ENCODE measurements at regions of chr2 and their contacts with region 1.

Region 1: GRCh38 chr2:45778720-45779171 is 127.3 kb downstream of the PRKCE start:
- DNase-seq: peak; percentile 37 to 85 (median 72)
- ATAC-seq: peak; percentile 90
- H3K4me3 ChIP-seq: peak overlapping the region in 1 of 2 experiments; percentile 29
- H3K4me3 Mint-ChIP-seq: peak overlapping the region; percentile 54
- H3K27ac ChIP-seq: no peak overlapping the region
- H3K27ac Mint-ChIP-seq: no peak overlapping the region
- H3K4me1 ChIP-seq: peaks cover 5% of the 10 kb centered on the region
- H3K4me1 Mint-ChIP-seq: peaks cover 5% of the 10 kb centered on the region
- H3K27me3 ChIP-seq: no peaks in the 10 kb centered on the region
- H3K27me3 Mint-ChIP-seq: no peaks in the 10 kb centered on the region
- CTCF ChIP-seq: peak; percentile 93

Region 2: DNA sequence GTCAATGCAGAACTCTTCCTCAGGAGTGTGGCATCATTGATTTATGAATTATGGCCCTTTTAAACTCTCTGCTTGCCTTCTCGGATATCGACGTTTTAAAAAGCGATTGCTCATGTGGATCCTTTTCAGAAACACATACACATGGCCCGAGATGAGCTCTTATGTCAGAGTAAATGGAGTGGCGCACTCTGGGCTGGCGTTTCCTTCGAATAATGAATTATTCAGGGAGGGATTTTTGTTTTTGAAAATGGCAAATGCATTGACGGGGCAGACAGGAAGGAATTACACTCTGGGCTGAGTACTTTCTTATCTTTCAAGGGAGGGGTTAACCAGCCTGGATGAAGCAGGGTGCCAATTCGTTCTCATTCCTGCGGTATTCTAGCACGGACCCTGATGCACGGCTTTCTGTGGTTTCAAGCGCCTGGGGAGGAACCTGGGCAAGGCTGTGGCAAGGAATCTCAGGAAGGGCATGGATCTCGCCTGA is 15.4 kb after region 1 on chr2:
- CTCF ChIA-PET with region 1: interaction called, 16 read pairs
- POLR2A ChIA-PET with region 1: interaction called, 4 read pairs
- intact Hi-C with region 1: no loop called
- DNase-seq: no peak
- ATAC-seq: no peak
- H3K4me3 ChIP-seq: no peak overlapping the region
- H3K4me3 Mint-ChIP-seq: no peak overlapping the region
- H3K27ac ChIP-seq: no peak overlapping the region
- H3K27ac Mint-ChIP-seq: no peak overlapping the region
- H3K4me1 ChIP-seq: no peaks in the 10 kb centered on the region
- H3K4me1 Mint-ChIP-seq: no peaks in the 10 kb centered on the region
- H3K27me3 ChIP-seq: no peaks in the 10 kb centered on the region
- H3K27me3 Mint-ChIP-seq: no peaks in the 10 kb centered on the region
- CTCF ChIP-seq: no peak

Region 3: GRCh38 chr2:45935791-45936622 is 157.3 kb after region 1 on chr2:
- CTCF ChIA-PET with region 1: no interaction called
- POLR2A ChIA-PET with region 1: no interaction called
- intact Hi-C with region 1: loop called (anchors 1 to 2 kb)
- DNase-seq: peak in 7 of 9 experiments; percentile 7 to 64 (median 37)
- ATAC-seq: no peak
- H3K4me3 ChIP-seq: no peak overlapping the region
- H3K4me3 Mint-ChIP-seq: no peak overlapping the region
- H3K27ac ChIP-seq: no peak overlapping the region
- H3K27ac Mint-ChIP-seq: no peak overlapping the region
- H3K4me1 ChIP-seq: peaks cover 4% of the 10 kb centered on the region
- H3K4me1 Mint-ChIP-seq: peaks cover 3% of the 10 kb centered on the region
- H3K27me3 ChIP-seq: no peaks in the 10 kb centered on the region
- H3K27me3 Mint-ChIP-seq: no peaks in the 10 kb centered on the region
- CTCF ChIP-seq: peak; percentile 25

Region 4: DNA sequence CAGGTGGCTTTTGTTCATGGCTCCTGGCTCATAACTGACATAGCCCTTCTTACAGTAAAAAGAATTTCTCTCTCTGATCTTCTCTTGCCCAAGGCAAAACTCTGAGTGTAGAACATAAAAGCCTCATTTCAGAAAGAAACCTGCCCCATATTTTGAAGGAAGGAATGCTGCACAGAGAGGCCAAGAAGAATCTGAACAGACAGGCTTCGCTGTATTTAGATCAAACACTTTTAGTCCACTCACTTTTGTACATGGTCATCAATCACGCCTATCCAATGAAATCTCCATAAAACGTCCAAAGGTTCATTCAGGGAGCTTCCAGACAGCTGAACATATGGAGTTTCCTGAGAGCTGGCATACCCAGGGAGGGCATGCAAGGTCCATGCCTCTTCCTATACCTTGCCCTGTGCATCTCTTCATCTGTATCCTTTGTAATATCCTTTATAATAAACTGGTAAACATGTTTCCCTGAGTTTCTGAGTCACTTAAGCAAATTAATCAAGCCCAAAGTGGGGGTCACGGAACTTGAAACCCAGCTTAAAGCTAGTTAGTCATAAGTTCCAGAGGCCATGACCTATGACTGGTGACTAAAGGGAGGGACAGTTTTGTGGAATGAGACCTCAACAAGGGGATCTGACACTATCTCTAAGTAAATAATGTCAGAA is 638.1 kb after region 1 on chr2:
- CTCF ChIA-PET with region 1: no interaction called
- POLR2A ChIA-PET with region 1: no interaction called
- intact Hi-C with region 1: no loop called
- DNase-seq: no peak
- ATAC-seq: no peak
- H3K4me3 ChIP-seq: no peak overlapping the region
- H3K4me3 Mint-ChIP-seq: no peak overlapping the region
- H3K27ac ChIP-seq: no peak overlapping the region
- H3K27ac Mint-ChIP-seq: no peak overlapping the region
- H3K4me1 ChIP-seq: no peaks in the 10 kb centered on the region
- H3K4me1 Mint-ChIP-seq: no peaks in the 10 kb centered on the region
- H3K27me3 ChIP-seq: no peaks in the 10 kb centered on the region
- H3K27me3 Mint-ChIP-seq: no peaks in the 10 kb centered on the region
- CTCF ChIP-seq: no peak

Measured in CD8-positive, alpha-beta T cell (primary cell).